B cell (primary cell): ENCODE measurements at regions of chr1 and their contacts with region 1.

Region 1: DNA sequence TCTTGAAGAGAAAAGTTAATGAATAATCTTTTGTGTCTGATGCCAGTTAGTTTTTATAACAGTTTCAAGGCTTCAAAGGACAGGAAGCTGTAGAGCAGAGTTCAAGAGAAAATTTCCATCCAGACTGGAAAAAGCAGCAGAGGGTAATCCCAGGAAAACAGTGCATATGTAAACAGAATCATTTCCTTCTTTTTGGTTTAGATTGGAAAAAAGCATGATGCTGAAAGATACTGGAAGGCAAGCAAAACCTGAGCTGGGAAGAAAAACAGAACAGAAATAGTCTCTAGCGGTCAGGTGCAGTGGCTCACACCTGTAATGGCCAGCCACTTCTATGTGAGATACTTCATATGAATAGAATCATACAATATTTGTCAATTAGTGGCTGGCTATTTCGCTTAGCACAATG is 71.9 kb downstream of the ZSWIM5 start:
- DNase-seq: no peak
- ATAC-seq: no peak
- H3K4me3 ChIP-seq: no peak overlapping the region
- H3K4me3 Mint-ChIP-seq: no peak overlapping the region
- H3K27ac ChIP-seq: no peak overlapping the region
- H3K27ac Mint-ChIP-seq: no peak overlapping the region
- H3K4me1 ChIP-seq: no peaks in the 10 kb centered on the region
- H3K4me1 Mint-ChIP-seq: no peaks in the 10 kb centered on the region
- H3K27me3 ChIP-seq: no peaks in the 10 kb centered on the region
- H3K27me3 Mint-ChIP-seq: peaks cover 4% of the 10 kb centered on the region
- CTCF ChIP-seq: no peak

Region 2: DNA sequence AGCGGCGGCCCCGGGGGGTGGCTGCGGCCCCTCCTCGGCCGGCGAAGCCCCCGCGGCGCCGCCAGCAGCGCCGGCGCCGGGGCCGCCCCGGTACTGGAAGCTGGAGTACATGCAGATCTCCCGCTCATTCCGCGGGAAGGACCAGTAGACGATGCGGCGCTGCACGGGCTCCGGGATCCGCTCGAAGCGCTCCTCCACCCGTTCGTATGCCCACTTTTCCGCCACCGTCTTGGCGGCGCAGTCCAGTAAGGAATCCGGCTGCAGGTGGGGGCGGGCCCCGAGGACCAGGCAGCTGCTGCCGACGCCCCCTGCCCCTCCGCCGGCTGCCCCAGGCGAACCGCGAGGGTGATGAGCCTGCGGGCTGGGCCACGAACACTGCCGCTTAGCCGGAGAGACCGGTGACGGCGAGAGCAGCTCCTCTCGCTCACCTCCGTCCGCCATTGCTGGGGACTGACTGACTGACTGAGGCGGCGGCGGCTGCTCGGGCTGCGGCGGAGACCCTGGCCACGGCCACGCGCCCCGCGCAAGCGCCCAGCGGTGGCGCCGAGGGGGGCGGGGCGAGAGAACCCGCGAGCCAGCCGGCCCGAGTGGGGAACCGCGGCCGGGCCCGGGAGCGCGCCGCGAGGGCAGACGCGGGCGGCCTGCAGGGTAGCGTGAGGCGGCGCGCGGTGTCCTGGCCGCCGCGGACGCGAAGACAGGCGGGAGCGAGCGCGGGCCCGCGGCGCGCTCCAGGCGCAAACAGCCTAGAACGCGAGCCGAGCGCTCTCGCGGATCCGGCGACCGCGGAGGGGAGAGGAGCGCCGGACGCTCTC is 71.6 kb after region 1 on chr1 and contains the start of gene ZSWIM5:
- CTCF ChIA-PET with region 1: no interaction called
- POLR2A ChIA-PET with region 1: interaction called, 10 read pairs
- intact Hi-C with region 1: no loop called
- DNase-seq: peak; percentile 74
- ATAC-seq: peak; percentile 80
- H3K4me3 ChIP-seq: peak within 1 kb of the TSS; percentile 21 to 68 (median 66)
- H3K4me3 Mint-ChIP-seq: peak within 1 kb of the TSS; percentile 96
- H3K27ac ChIP-seq: no peak within 1 kb of the TSS
- H3K27ac Mint-ChIP-seq: peak within 1 kb of the TSS; percentile 65
- H3K4me1 ChIP-seq: peaks cover 11 to 15% of the 10 kb centered on the region in 2 donors
- H3K4me1 Mint-ChIP-seq: peaks cover 13% of the 10 kb centered on the region
- H3K27me3 ChIP-seq: peaks cover 0 to 47% (median 26%) of the 10 kb centered on the region in 4 experiments
- H3K27me3 Mint-ChIP-seq: peaks cover 38% of the 10 kb centered on the region
- CTCF ChIP-seq: no peak
- total RNA-seq, gene ZSWIM5: 0.85 and 1.7 TPM in 2 replicates